ENCODE measurements at regions of chr1 and their contacts with region 1.

Region 1: DNA sequence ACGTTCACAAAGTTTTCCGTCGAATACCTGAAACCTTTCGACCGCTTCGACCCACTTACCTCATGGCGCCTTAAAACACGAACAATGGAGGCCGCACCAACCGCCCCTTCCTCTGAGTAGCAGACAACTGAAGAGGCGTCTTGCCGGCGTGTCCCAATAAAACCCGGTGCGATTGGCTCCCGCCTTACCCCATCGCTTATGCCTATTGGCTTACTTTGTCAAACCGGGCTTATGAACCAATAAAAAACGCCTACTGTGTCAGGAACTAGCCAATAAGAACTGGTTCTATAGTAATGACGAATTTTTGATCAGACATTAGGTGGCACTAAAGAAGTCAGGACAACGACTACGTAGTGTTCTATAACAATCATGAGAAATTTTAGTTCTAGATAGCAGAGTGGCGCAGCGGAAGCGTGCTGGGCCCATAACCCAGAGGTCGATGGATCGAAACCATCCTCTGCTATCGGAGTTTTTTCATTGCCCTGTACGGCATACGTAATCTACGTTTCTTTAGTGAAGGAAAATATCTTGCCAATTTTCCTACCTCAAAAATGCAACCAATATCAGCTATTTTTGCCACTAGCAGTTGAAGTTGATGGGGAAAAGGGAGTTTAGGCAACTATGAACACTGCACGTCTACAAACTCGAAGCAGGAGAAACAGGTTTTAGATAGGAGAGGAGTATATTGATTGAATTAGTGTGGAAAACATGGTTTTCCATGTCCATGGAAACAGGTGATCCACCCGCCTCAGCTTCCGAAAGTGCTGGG is at the start of gene ILF2:
- DNase-seq: peak; percentile 99
- H3K4me3 Mint-ChIP-seq: no peak within 1 kb of the TSS
- H3K27ac Mint-ChIP-seq: peak within 1 kb of the TSS; percentile 85
- H3K4me1 Mint-ChIP-seq: peaks cover 26% of the 10 kb centered on the region
- H3K27me3 Mint-ChIP-seq: no peaks in the 10 kb centered on the region
- total RNA-seq, gene ILF2: 377 and 390 TPM in 2 replicates

Region 2: DNA sequence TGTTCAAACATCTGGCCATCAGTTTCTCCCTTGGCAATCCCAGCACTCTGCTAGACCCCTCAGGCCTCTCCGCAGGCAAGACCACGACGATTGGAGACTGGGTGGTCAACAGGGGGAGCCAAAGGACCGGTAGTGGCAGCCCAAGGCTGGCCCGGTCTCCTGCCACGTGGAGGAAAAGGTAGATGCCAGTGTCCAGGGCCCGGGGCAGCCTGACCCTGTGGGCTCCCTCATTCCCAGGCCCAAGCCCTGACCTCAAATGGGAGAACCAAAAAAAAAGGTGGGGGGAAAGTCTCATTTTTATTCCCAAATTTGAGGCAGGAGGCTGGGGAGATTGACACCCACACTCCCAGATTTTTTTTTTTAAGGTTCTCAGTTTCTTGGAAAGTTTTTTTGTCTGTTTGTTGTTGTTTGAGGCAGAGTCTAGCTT is 160.0 kb before region 1 on chr1:
- intact Hi-C with region 1: loop called (anchors 2 kb)
- DNase-seq: peak; percentile 94
- H3K4me3 Mint-ChIP-seq: no peak overlapping the region
- H3K27ac Mint-ChIP-seq: peak overlapping the region; percentile 80
- H3K4me1 Mint-ChIP-seq: peaks cover 21% of the 10 kb centered on the region
- H3K27me3 Mint-ChIP-seq: no peaks in the 10 kb centered on the region

Region 3: DNA sequence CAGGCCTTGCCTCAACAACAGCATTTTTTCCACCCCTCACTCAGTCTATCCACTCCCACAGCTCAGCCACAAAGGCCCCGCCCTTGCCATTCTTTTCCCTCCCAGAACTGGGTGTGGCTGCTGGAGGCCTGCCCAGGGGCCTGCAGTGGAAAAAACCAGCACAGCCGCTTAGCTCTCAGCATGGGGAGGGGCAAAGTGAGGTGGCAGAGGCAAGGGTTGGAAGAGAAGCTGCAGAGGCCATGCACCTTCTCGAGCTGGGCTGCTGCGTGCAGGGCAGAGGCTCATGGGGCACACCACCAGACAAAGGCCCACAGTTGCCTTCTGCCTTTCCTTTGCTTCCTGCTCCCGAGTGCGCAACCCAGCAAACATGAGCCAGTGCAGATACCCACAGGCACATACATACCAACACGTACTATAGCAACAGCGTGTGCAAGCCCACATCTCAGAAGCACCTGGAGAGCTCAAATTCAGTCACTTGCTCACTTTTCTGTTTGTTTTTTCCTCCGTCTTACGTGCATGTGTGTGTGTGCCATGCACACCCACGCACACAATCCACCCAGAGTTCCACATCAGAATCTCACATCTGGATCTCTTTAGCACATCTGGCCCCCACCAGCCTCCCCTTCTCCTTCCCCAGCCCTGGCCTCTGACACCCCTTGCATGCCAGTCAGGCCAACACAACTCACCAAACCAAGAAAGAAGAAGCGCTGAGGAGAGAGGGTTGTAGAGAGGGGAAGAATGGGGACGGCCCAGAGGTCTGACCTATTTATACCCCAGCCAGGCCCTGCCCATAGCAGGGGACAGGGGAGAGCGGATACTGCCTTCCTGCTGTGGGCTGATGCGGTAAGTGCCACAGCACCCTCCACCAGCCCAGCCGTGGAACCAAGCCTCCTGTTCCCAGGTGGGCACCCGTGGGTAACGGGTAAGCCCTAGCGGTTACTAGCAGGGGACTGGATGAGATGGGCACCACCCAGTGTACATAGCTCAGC is 125.7 kb before region 1 on chr1 and contains the start of gene S100A4:
- intact Hi-C with region 1: loop called (anchors 2 kb)
- DNase-seq: peak; percentile 99
- H3K4me3 Mint-ChIP-seq: peak within 1 kb of the TSS; percentile 95
- H3K27ac Mint-ChIP-seq: peak within 1 kb of the TSS; percentile 99
- H3K4me1 Mint-ChIP-seq: peaks cover 76% of the 10 kb centered on the region
- H3K27me3 Mint-ChIP-seq: no peaks in the 10 kb centered on the region
- total RNA-seq, gene S100A4: 132 and 134 TPM in 2 replicates

Region 4: DNA sequence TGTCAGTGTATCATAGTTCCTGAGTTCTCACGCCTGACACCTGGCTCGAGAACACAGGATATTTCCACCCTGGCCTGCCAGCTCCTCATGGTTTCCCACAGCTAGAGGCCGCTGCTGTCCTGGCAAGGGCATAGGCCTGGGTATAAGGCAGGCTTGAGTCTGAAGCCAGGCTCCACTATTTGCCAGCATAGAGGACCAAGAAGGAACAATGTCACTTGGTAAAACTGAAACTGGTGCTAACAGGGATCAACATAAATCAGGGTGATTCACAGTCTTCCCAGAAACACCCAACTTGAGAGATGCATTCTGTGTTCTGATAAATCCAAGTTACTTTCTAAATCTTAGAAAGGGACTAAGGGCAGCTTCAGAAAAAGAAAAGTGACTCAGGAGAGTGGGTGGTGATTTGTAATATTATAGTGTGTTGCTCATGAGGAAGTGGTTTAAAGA is 98.5 kb before region 1 on chr1:
- intact Hi-C with region 1: loop called (anchors 1 kb)
- DNase-seq: peak; percentile 84
- H3K4me3 Mint-ChIP-seq: no peak overlapping the region
- H3K27ac Mint-ChIP-seq: peak overlapping the region; percentile 72
- H3K4me1 Mint-ChIP-seq: peaks cover 37% of the 10 kb centered on the region
- H3K27me3 Mint-ChIP-seq: peaks cover 8% of the 10 kb centered on the region

Region 5: GRCh38 chr1:153633716-153634665 is 37.1 kb before region 1 on chr1 and contains the start of gene CHTOP:
- intact Hi-C with region 1: loop called (anchors 1 kb)
- DNase-seq: peak; percentile 99
- H3K4me3 Mint-ChIP-seq: peak within 1 kb of the TSS; percentile 91
- H3K27ac Mint-ChIP-seq: peak within 1 kb of the TSS; percentile 100
- H3K4me1 Mint-ChIP-seq: peaks cover 34% of the 10 kb centered on the region
- H3K27me3 Mint-ChIP-seq: no peaks in the 10 kb centered on the region
- total RNA-seq, gene CHTOP: 110 and 114 TPM in 2 replicates

Region 6: DNA sequence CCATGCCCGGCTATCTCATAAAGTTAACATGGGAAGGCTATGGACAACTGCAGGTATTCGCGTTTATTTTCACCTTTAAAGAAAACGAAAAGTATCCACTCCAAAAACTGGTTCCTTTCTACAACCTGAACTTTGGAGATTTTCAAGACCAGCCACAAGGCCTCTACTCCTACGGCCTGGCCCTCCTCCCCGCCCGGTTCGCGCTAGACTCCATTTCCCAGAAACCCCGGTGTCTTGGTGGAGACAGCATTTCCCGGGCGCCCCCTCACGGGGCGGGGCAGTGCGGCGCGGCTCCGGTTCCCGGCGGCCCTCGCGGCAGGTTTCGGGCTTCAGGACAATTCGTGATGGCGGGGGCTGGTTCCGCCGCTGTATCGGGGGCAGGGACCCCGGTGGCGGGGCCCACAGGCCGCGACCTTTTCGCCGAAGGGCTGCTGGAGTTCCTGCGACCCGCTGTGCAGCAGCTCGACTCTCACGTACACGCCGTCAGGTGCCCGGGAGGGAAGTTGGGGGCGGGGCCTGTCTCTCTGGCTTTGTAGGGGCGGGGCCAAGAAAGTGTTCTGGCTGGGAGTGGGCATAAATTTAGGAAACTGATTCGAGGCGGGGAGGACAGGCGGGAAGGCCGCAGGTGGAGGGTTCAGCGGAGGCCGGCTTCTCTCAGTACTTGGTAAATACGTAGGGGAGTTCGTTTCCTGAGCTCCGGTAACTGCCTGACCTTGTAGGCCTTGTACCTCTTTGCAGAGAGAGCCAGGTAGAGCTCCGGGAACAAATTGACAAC is 12.5 kb before region 1 on chr1 and contains the start of gene SNAPIN:
- intact Hi-C with region 1: loop called (anchors 1 kb)
- DNase-seq: peak; percentile 98
- H3K4me3 Mint-ChIP-seq: peak within 1 kb of the TSS; percentile 98
- H3K27ac Mint-ChIP-seq: peak within 1 kb of the TSS; percentile 89
- H3K4me1 Mint-ChIP-seq: peaks cover 13% of the 10 kb centered on the region
- H3K27me3 Mint-ChIP-seq: no peaks in the 10 kb centered on the region
- total RNA-seq, gene SNAPIN: 28.6 and 31.6 TPM in 2 replicates

Region 7: GRCh38 chr1:153727463-153728304 is 56.6 kb after region 1 on chr1 and contains the start of gene INTS3:
- intact Hi-C with region 1: loop called (anchors 2 kb)
- DNase-seq: peak; percentile 100
- H3K4me3 Mint-ChIP-seq: peak within 1 kb of the TSS; percentile 96
- H3K27ac Mint-ChIP-seq: peak within 1 kb of the TSS; percentile 97
- H3K4me1 Mint-ChIP-seq: peaks cover 32% of the 10 kb centered on the region
- H3K27me3 Mint-ChIP-seq: no peaks in the 10 kb centered on the region
- total RNA-seq, gene INTS3: 63.1 and 64.8 TPM in 2 replicates